Activated CD4-positive, alpha-beta memory T cell treated with anti-CD3 and anti-CD28 coated beads for 36 hours (primary cell): ENCODE measurements at regions of chr14 and their contacts with region 1.

Region 1: GRCh38 chr14:67526676-67527459 is 6.2 kb upstream of the PLEKHH1 start:
- DNase-seq: peak; percentile 52
- H3K4me3 Mint-ChIP-seq: no peak overlapping the region
- H3K27ac Mint-ChIP-seq: no peak overlapping the region
- H3K4me1 Mint-ChIP-seq: peaks cover 3% of the 10 kb centered on the region
- H3K27me3 Mint-ChIP-seq: peaks cover 22% of the 10 kb centered on the region

Region 2: DNA sequence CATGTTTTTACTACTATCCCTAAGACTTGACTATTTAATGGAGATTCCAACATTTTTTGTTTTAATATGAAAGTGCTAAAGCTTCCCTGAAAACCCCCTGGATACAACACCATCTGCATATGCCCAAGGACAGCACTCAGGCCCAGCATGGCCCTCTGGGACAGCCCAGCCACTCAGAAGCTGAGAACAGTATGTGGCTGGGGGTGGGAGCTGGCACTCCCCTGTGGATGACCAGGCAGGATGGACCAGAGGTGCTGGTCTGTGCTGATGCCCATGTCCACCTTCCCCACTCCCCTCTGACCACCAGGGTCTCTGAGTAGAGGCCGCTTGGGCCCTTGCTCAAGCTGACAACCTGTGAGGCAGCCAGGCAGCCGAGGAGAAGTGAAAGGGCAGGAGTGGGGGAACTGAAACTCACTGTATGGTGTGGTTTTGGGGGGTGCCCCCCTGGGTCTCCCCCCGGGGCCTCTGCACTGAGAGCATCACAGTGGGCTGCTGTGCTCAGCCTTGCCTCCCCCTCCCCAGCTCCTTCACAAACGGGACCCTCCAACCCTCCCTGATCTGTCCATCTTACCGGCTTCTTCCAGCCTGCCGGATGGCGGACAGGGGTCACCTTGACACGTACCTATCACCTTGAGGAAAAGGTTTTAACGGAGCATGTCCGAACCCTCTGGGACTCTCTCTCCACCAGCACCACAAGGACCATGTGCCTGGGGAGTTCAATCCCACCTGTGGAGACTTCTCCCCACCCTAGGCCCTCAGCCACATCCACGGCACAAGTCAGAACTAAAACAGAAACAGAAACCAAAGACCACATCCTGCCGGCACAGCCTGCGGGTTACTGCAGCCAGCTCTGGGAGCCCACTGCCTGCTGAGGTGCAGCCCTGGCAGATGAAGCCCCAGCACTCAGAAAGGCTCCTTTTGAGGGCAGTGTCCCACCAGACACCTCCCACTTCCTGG is 38.7 kb before region 1 on chr14 and contains the start of gene TMEM229B:
- CTCF ChIA-PET with region 1: interaction called, 14 read pairs
- POLR2A ChIA-PET with region 1: no interaction called
- intact Hi-C with region 1: no loop called
- DNase-seq: peak; percentile 88
- H3K4me3 Mint-ChIP-seq: peak within 1 kb of the TSS; percentile 71
- H3K27ac Mint-ChIP-seq: peak within 1 kb of the TSS; percentile 80
- H3K4me1 Mint-ChIP-seq: peaks cover 47% of the 10 kb centered on the region
- H3K27me3 Mint-ChIP-seq: peaks cover 1% of the 10 kb centered on the region
- total RNA-seq, gene TMEM229B: 0.93 to 1.1 TPM

Region 3: DNA sequence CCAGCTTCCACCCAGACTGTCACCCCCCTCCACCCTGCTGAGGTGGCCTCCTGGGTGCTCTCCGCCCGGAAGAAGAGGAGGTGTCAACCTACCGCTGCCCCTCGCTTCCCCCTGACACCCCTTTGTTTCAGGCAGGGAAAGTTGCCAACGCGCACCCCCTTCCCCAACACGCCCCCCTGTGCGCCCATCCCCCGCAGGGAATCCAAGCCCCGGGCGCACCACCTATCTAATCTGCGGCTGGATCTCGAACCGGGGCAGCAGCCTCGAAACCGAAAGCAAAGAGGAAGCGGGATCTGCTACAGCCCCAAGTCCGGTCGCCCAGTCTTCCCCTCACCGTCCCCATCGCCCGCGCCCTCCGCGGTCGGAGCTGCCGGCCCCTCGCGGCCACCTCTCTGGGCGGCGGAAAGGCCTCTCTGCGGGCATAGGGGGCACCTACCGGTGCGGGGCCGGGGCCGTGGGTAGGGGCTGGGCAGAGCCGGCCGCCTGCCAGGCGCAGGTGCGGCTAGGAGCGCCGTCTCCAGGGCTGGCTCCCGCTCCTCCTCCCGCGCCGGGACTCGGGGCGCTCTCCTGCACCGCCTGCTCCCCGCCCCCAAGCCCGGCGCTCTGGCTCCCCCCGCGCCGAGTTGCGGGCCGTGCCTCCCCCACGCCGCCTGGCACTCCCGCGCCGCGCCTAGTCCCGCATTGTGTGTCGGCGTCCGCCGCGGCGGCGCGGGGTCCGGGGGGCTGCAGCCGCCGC is 12.1 kb before region 1 on chr14:
- CTCF ChIA-PET with region 1: interaction called, 20 read pairs
- POLR2A ChIA-PET with region 1: interaction called, 3 read pairs
- intact Hi-C with region 1: no loop called
- DNase-seq: peak; percentile 44
- H3K4me3 Mint-ChIP-seq: peak overlapping the region; percentile 78
- H3K27ac Mint-ChIP-seq: no peak overlapping the region
- H3K4me1 Mint-ChIP-seq: peaks cover 7% of the 10 kb centered on the region
- H3K27me3 Mint-ChIP-seq: no peaks in the 10 kb centered on the region

Region 4: GRCh38 chr14:67541448-67542387 is 14.8 kb after region 1 on chr14:
- CTCF ChIA-PET with region 1: interaction called, 26 read pairs
- POLR2A ChIA-PET with region 1: no interaction called
- intact Hi-C with region 1: no loop called
- DNase-seq: peak; percentile 37
- H3K4me3 Mint-ChIP-seq: peak overlapping the region; percentile 50
- H3K27ac Mint-ChIP-seq: no peak overlapping the region
- H3K4me1 Mint-ChIP-seq: peaks cover 5% of the 10 kb centered on the region
- H3K27me3 Mint-ChIP-seq: peaks cover 22% of the 10 kb centered on the region

Region 5: GRCh38 chr14:67666750-67667449 is 140.0 kb after region 1 on chr14:
- CTCF ChIA-PET with region 1: interaction called, 14 read pairs
- POLR2A ChIA-PET with region 1: no interaction called
- intact Hi-C with region 1: no loop called
- DNase-seq: peak; percentile 20
- H3K4me3 Mint-ChIP-seq: no peak overlapping the region
- H3K27ac Mint-ChIP-seq: no peak overlapping the region
- H3K4me1 Mint-ChIP-seq: peaks cover 56% of the 10 kb centered on the region
- H3K27me3 Mint-ChIP-seq: no peaks in the 10 kb centered on the region